ENCODE measurements at regions of chr11 and their contacts with region 1.

Region 1: DNA sequence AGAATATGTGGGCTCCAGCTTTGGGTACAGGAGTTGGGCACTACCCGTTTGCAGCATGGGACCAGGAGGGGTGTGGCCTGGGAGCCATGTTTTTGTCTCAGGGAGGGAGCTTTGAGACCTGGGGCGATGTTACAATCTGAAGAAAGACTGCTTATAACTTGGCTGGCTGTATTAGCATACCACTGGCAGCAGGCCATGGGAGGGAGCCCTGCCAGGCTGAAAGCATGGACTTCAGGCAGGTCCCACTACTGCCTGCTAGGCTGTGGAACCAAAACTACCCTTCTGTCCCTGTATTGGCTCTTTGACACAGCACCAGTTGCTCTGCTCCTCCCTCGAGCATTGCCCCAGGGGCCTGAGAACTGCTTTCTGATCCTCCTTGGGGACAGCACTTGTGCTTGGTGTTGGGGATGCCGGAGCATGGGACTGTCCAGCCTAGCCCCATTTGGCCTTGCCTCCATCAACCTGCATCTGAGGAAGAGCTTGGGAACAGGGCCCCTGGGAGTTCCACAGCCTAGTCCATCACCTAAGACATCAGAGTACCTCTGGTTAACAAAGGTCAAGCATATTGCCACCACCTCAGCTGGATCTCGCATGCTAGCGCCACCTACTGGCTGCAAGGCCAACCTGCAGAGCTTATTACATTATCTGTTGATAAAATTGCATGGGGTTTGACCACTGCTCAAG is 217.4 kb downstream of the SBF2 start:
- DNase-seq: no peak
- ATAC-seq: peak; percentile 87
- H3K4me3 ChIP-seq: no peak overlapping the region
- H3K27ac ChIP-seq: no peak overlapping the region
- H3K4me1 ChIP-seq: no peaks in the 10 kb centered on the region
- H3K27me3 ChIP-seq: no peaks in the 10 kb centered on the region
- CTCF ChIP-seq: peak; percentile 75 to 89 (median 82)
- EP300 ChIP-seq: no peak
- POLR2A ChIP-seq: no peak
- RAD21 ChIP-seq: peak; percentile 65

Region 2: GRCh38 chr11:9861860-9862725 is 214.5 kb before region 1 on chr11:
- CTCF ChIA-PET with region 1: interaction called, 6 read pairs
- POLR2A ChIA-PET with region 1: no interaction called
- RAD21 ChIA-PET with region 1: no interaction called
- SMC1A ChIA-PET with region 1: interaction called, 3 read pairs
- in situ Hi-C with region 1: no loop called
- intact Hi-C with region 1: loop called (anchors 1 kb)
- DNase-seq: peak; percentile 31
- ATAC-seq: peak; percentile 100
- H3K4me3 ChIP-seq: no peak overlapping the region
- H3K27ac ChIP-seq: no peak overlapping the region
- H3K4me1 ChIP-seq: no peaks in the 10 kb centered on the region
- H3K27me3 ChIP-seq: no peaks in the 10 kb centered on the region; a peak in 1 of 4 replicates
- CTCF ChIP-seq: peak; percentile 78 to 89 (median 85)
- EP300 ChIP-seq: no peak
- POLR2A ChIP-seq: no peak
- RAD21 ChIP-seq: peak; percentile 88

Region 3: DNA sequence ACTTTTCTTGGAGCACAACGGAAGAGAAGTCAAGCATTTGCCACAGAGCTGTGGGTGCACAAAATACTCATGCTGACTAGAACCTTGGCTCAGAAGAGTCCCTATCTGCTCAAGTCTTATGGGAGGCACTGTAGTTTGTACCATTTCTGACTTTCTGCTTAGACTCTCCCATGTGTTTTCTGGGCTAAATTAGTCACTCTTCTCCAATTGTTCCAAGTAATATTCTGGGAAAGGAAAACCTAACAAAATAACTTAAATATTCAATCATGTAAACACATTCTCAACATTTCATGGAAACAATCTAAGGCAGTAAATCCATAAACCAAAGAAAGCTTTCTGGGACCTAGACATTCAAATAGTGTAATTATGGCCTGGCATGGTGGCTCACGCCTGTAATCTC is 192.0 kb before region 1 on chr11:
- CTCF ChIA-PET with region 1: no interaction called
- POLR2A ChIA-PET with region 1: no interaction called
- RAD21 ChIA-PET with region 1: no interaction called
- SMC1A ChIA-PET with region 1: no interaction called
- in situ Hi-C with region 1: no loop called
- intact Hi-C with region 1: no loop called
- DNase-seq: no peak
- ATAC-seq: no peak
- H3K4me3 ChIP-seq: no peak overlapping the region
- H3K27ac ChIP-seq: no peak overlapping the region
- H3K4me1 ChIP-seq: no peaks in the 10 kb centered on the region
- H3K27me3 ChIP-seq: no peaks in the 10 kb centered on the region; a peak in 1 of 4 replicates
- CTCF ChIP-seq: no peak
- EP300 ChIP-seq: no peak
- POLR2A ChIP-seq: no peak
- RAD21 ChIP-seq: no peak

Region 4: GRCh38 chr11:10091314-10092045 is 14.9 kb after region 1 on chr11:
- CTCF ChIA-PET with region 1: interaction called, 15 read pairs
- POLR2A ChIA-PET with region 1: no interaction called
- RAD21 ChIA-PET with region 1: no interaction called
- SMC1A ChIA-PET with region 1: no interaction called
- in situ Hi-C with region 1: no loop called
- intact Hi-C with region 1: no loop called
- DNase-seq: no peak
- ATAC-seq: no peak
- H3K4me3 ChIP-seq: no peak overlapping the region
- H3K27ac ChIP-seq: no peak overlapping the region
- H3K4me1 ChIP-seq: no peaks in the 10 kb centered on the region
- H3K27me3 ChIP-seq: no peaks in the 10 kb centered on the region; a peak in 1 of 4 replicates
- CTCF ChIP-seq: no peak
- EP300 ChIP-seq: no peak
- POLR2A ChIP-seq: no peak
- RAD21 ChIP-seq: no peak

Region 5: GRCh38 chr11:10878408-10879214 is 802.0 kb after region 1 on chr11:
- CTCF ChIA-PET with region 1: no interaction called
- POLR2A ChIA-PET with region 1: no interaction called
- RAD21 ChIA-PET with region 1: no interaction called
- SMC1A ChIA-PET with region 1: no interaction called
- in situ Hi-C with region 1: no loop called
- intact Hi-C with region 1: no loop called
- DNase-seq: peak; percentile 19
- ATAC-seq: peak; percentile 80
- H3K4me3 ChIP-seq: no peak overlapping the region
- H3K27ac ChIP-seq: no peak overlapping the region
- H3K4me1 ChIP-seq: no peaks in the 10 kb centered on the region
- H3K27me3 ChIP-seq: no peaks in the 10 kb centered on the region
- CTCF ChIP-seq: peak; percentile 42 to 71 (median 64)
- EP300 ChIP-seq: no peak
- POLR2A ChIP-seq: no peak
- RAD21 ChIP-seq: no peak

Region 6: DNA sequence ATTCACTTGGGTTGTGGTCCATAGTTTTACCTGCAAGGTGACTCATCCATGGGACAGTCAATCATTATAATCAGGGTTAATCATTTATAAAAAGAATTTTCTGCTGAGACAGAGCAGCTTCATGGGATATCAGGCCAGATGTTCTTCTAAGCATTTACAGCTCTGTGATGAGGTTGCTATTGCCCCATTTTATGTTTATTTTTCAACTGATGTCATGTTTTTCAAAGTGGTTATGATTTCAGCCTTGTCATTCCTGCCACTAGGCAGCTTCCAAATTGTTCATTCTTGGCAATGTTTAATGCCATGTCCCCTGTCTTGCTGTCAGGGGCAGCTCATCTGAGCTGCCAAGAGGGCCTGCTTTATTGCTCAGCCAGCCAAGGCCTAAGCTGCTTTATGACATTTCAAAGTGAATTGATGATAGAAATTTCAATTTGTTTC is 817.1 kb after region 1 on chr11:
- CTCF ChIA-PET with region 1: no interaction called
- POLR2A ChIA-PET with region 1: no interaction called
- RAD21 ChIA-PET with region 1: no interaction called
- SMC1A ChIA-PET with region 1: no interaction called
- in situ Hi-C with region 1: no loop called
- intact Hi-C with region 1: no loop called
- DNase-seq: no peak
- ATAC-seq: no peak
- H3K4me3 ChIP-seq: no peak overlapping the region
- H3K27ac ChIP-seq: no peak overlapping the region
- H3K4me1 ChIP-seq: no peaks in the 10 kb centered on the region
- H3K27me3 ChIP-seq: no peaks in the 10 kb centered on the region
- CTCF ChIP-seq: no peak
- EP300 ChIP-seq: no peak
- POLR2A ChIP-seq: no peak
- RAD21 ChIP-seq: no peak